Naive thymus-derived CD4-positive, alpha-beta T cell (primary cell): ENCODE measurements at regions of chr6 and their contacts with region 1.

Region 1: DNA sequence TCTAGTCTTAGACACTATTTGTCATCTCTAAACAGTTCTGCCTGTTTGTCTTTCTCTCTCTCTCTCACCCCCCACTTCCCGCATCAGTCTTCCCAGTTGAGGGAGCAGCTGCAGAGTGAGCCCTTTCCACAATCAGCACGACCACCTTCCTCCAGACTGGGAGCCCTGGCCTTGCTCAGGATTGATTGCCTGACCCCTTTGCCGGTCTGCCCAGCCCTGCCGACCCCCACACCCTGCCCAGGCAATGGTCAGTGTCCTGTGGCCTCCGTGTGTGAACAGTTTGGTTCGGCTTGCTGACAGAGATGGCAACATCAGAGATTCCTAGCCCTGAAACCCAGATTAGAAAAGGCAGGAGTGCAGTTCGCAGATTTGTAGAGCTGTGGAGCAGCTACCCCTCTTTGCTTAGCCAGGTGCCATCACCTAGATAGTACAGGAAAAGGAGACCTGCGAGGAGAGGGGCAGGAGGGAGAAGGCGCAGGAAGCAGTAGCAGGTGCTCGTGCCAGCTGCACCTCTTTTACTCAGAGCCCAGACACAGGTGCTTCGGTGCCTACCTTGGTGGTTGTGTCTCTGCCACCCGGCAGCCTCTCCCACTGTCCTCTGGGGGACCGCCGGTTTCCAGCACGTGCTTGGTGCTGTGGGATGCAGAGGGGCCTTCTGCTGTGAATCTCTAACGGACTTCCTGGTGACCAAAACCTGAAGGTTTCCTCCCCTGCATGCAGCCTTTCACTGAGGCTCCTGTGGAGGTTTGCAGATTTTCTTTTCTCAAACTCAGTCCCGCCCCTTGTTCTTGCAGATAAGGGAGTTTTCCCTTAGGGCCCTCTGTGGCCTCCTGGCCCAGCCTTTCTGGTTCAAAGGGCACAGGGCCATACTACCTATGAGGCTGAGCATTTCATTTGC is 92.4 kb downstream of the SCML4 start:
- DNase-seq: peak in 7 of 9 donors; percentile 45 to 64 (median 58)
- ATAC-seq: peak; percentile 53
- H3K4me3 ChIP-seq: peak overlapping the region; percentile 68
- H3K4me3 Mint-ChIP-seq: peak overlapping the region; percentile 85 to 99 (median 97)
- H3K27ac ChIP-seq: peak overlapping the region; percentile 77
- H3K27ac Mint-ChIP-seq: peak overlapping the region; percentile 77 to 98 (median 95)
- H3K4me1 ChIP-seq: peaks cover 55 to 65% of the 10 kb centered on the region in 2 donors
- H3K4me1 Mint-ChIP-seq: peaks cover 56 to 86% (median 76%) of the 10 kb centered on the region in 7 donors
- H3K27me3 ChIP-seq: no peaks in the 10 kb centered on the region
- H3K27me3 Mint-ChIP-seq: peaks cover 0 to 13% (median 0%) of the 10 kb centered on the region in 5 donors

Region 2: DNA sequence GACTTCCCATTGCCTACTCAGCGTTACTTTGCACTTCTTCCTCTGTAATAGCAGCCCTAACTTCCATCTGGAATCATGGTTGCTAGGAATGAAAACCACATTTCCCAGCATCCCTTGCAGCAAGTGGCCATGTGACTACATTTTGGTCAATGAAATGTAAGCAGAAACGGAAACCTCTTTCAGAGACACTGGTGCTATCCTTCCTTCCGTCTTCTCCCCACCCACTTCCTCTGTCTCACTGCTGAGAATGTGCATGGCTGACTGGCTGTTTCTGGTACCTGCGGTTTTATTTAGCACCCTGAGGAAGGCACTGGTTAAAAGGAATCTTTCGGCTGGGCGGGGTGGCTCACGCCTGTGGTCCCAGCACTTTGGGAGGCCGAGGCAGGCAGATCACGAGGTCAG is 15.0 kb before region 1 on chr6:
- CTCF ChIA-PET with region 1: interaction called, 10 read pairs
- POLR2A ChIA-PET with region 1: interaction called, 10 read pairs
- intact Hi-C with region 1: loop called (anchors 1 kb)
- DNase-seq: peak; percentile 27 to 89 (median 85)
- ATAC-seq: peak; percentile 95
- H3K4me3 ChIP-seq: no peak overlapping the region
- H3K4me3 Mint-ChIP-seq: peak overlapping the region; percentile 43 to 81 (median 72)
- H3K27ac ChIP-seq: peak overlapping the region; percentile 49
- H3K27ac Mint-ChIP-seq: peak overlapping the region; percentile 82 to 97 (median 92)
- H3K4me1 ChIP-seq: peaks cover 47 to 57% of the 10 kb centered on the region in 2 donors
- H3K4me1 Mint-ChIP-seq: peaks cover 46 to 86% (median 74%) of the 10 kb centered on the region in 7 donors
- H3K27me3 ChIP-seq: no peaks in the 10 kb centered on the region
- H3K27me3 Mint-ChIP-seq: no peaks in the 10 kb centered on the region

Region 3: DNA sequence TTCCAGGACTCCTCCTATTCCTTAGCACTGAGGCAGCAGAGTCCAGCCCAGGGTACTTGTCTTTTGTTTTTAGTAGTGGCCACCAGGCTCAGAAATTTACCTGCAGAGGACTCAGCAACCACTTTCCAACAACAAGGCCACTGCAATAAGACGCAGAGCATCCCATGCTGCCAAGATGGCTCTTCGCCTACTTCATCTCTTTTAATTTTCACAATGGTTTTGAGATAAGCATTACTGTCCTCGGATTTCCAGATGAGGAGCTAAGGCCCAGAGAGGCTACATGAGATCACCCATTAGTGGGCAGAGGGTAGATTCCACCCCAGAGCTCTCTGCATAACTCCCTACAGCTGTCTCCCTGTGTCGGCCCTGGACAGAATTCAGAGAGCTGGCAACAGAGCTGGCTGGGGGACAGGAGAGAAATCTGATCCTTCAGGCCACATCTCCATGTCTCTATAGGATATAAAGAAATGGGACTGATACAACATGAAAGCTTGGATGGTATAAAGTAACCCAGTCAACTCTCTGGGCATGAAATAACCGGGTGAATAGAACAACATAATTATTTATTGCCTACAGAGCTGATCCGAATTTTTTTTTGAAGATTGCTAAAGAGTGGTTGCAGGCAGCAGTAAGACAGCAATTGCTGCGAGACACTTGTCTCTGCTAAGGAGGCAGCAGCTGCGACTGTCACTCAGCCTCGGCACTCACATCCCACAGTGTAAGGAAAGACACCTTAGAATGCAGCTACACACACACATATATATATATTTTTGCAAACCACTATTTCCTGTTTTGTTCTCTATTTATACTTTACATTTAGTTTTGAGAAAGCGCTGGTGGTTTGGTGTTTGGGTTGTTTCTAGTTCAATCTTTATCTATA is 55.3 kb after region 1 on chr6:
- CTCF ChIA-PET with region 1: interaction called, 28 read pairs
- POLR2A ChIA-PET with region 1: interaction called, 140 read pairs
- intact Hi-C with region 1: loop called (anchors 1 kb)
- DNase-seq: peak in 7 of 9 donors; percentile 51 to 80 (median 65)
- ATAC-seq: peak; percentile 87
- H3K4me3 ChIP-seq: peak overlapping the region; percentile 34
- H3K4me3 Mint-ChIP-seq: peak overlapping the region; percentile 74 to 88 (median 82)
- H3K27ac ChIP-seq: peak overlapping the region; percentile 70
- H3K27ac Mint-ChIP-seq: peak overlapping the region; percentile 83 to 97 (median 95)
- H3K4me1 ChIP-seq: peaks cover 51 to 78% of the 10 kb centered on the region in 2 donors
- H3K4me1 Mint-ChIP-seq: peaks cover 65 to 92% (median 90%) of the 10 kb centered on the region in 7 donors
- H3K27me3 ChIP-seq: no peaks in the 10 kb centered on the region
- H3K27me3 Mint-ChIP-seq: peaks cover 0 to 6% (median 0%) of the 10 kb centered on the region in 5 donors

Region 4: DNA sequence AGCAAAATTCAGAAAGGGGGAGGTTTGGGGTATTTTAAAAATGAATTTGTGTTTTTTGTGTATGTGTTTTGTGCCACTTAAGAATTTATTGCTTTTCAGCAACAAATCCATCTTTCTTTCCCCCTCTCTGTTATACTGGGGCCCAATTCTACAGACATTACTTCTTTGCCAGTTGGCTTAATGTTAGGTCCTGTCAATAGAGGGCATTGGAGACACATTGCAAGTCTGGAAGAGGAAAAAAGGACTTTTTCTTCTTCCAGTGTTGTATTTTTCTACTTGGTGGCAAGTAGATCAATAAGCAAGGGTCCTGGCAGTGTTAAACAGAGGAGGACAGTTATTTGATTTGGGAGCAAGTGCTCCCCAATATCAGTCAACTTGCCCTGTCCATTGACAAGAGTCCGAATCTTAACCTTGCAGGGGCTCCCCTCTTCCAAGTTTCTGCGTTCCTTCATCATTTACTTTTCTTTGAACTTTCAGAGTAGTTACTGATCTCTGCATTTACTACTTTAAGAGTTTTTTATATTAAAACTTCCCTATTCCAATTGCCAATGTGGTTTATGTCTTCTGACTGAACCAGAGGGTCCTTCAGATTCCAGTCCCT is 69.0 kb after region 1 on chr6:
- CTCF ChIA-PET with region 1: interaction called, 7 read pairs
- POLR2A ChIA-PET with region 1: interaction called, 10 read pairs
- intact Hi-C with region 1: loop called in 1 of 2 experiments (anchors 1 kb)
- DNase-seq: peak in 4 of 9 donors; percentile 28 to 53 (median 42)
- ATAC-seq: peak; percentile 75
- H3K4me3 ChIP-seq: no peak overlapping the region
- H3K4me3 Mint-ChIP-seq: peak overlapping the region in 2 of 10 donors; percentile 33 to 43
- H3K27ac ChIP-seq: no peak overlapping the region
- H3K27ac Mint-ChIP-seq: peak overlapping the region in 8 of 9 donors; percentile 53 to 96 (median 90)
- H3K4me1 ChIP-seq: peaks cover 10 to 34% of the 10 kb centered on the region in 2 donors
- H3K4me1 Mint-ChIP-seq: peaks cover 17 to 87% (median 81%) of the 10 kb centered on the region in 7 donors
- H3K27me3 ChIP-seq: no peaks in the 10 kb centered on the region
- H3K27me3 Mint-ChIP-seq: peaks cover 0 to 9% (median 0%) of the 10 kb centered on the region in 5 donors

Region 5: DNA sequence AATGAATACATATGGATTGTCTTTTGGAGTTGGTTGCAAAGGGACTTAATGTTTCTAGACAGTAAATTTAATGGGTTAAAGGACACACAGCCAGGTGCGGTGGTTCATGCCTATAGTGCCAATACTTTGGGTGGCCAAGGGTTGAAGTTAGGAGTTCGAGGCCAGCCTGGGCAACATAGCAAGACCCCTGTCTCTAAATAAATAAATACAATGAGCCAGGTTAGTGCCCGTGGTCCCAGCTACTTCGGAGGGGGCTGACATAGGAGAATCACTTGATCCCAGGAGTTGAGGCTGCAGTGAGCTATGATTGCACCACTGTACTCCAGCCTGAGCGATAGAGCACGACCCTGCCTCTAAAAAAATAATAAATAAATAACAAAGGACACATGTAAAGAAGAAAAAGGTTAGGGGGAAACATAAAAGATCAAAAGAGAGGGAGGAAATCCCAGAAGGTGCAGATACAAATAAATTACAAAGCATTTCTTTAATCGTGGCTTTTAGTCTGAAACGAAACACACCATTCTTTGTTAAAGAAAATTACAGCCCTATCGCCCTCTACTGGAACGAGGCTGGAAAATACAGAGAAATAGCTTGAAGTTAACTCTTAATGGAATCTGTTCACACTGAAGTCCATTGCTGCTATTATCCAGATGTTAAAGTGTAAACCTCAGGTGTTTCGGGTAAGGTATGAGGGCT is 135.1 kb after region 1 on chr6:
- CTCF ChIA-PET with region 1: interaction called, 33 read pairs
- POLR2A ChIA-PET with region 1: interaction called, 3 read pairs
- intact Hi-C with region 1: loop called (anchors 1 kb)
- DNase-seq: peak in 7 of 9 donors; percentile 29 to 64 (median 52)
- ATAC-seq: peak; percentile 76
- H3K4me3 ChIP-seq: no peak overlapping the region
- H3K4me3 Mint-ChIP-seq: peak overlapping the region in 1 of 10 donors; percentile 32
- H3K27ac ChIP-seq: no peak overlapping the region
- H3K27ac Mint-ChIP-seq: peak overlapping the region in 3 of 9 donors; percentile 37 to 64 (median 45)
- H3K4me1 ChIP-seq: no peaks in the 10 kb centered on the region
- H3K4me1 Mint-ChIP-seq: peaks cover 0 to 10% (median 4%) of the 10 kb centered on the region in 7 donors
- H3K27me3 ChIP-seq: no peaks in the 10 kb centered on the region
- H3K27me3 Mint-ChIP-seq: peaks cover 0 to 10% (median 0%) of the 10 kb centered on the region in 5 donors

Region 6: DNA sequence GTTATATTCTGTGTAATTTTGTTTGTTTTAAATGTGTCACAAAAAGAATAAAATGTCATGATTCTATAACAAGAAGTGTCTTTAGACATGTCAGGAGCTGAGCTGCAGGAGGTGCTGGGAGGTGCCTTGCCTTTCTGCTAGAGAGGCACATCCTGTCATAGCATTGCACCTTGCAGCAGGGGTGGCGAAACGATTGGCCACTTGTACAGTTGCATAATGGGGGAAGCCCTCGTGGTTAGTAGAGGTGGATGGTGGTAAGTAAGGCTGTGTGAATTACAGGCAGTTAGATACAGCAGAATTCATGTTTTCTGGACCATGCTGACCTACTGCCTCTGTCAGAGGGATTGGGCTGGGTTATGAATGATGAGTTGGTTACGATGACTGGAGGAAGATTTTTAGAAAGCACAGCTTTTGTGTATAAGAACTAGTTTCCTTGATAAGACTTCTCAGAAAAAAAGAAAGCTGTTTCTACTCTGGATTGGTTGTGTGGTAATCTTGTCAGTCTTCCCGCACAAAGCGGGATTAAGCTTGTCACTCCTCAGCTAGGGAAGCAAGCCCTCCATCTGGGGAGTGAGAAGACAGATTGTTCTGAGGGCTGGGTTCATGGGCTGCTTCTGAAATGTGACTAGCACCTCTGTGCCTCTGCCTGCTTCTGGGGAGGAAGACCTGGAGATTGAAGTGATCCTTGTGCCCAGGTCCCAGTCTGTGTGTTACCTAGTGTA is 904.0 kb after region 1 on chr6:
- CTCF ChIA-PET with region 1: no interaction called
- POLR2A ChIA-PET with region 1: no interaction called
- intact Hi-C with region 1: no loop called
- DNase-seq: peak in 7 of 9 donors; percentile 9 to 52 (median 26)
- ATAC-seq: peak; percentile 93
- H3K4me3 ChIP-seq: no peak overlapping the region
- H3K4me3 Mint-ChIP-seq: peak overlapping the region in 7 of 10 donors; percentile 0 to 59 (median 26)
- H3K27ac ChIP-seq: no peak overlapping the region
- H3K27ac Mint-ChIP-seq: peak overlapping the region in 4 of 9 donors; percentile 2 to 53 (median 12)
- H3K4me1 ChIP-seq: peaks cover 12 to 15% of the 10 kb centered on the region in 2 donors
- H3K4me1 Mint-ChIP-seq: peaks cover 17 to 72% (median 58%) of the 10 kb centered on the region in 7 donors
- H3K27me3 ChIP-seq: no peaks in the 10 kb centered on the region
- H3K27me3 Mint-ChIP-seq: peaks cover 0 to 6% (median 0%) of the 10 kb centered on the region in 5 donors